ENCODE measurements at regions of chr1 and their contacts with region 1.

Region 1: GRCh38 chr1:170687621-170688020 is 23.7 kb downstream of the PRRX1 start:
- DNase-seq: no peak
- CTCF ChIP-seq: no peak

Region 2: DNA sequence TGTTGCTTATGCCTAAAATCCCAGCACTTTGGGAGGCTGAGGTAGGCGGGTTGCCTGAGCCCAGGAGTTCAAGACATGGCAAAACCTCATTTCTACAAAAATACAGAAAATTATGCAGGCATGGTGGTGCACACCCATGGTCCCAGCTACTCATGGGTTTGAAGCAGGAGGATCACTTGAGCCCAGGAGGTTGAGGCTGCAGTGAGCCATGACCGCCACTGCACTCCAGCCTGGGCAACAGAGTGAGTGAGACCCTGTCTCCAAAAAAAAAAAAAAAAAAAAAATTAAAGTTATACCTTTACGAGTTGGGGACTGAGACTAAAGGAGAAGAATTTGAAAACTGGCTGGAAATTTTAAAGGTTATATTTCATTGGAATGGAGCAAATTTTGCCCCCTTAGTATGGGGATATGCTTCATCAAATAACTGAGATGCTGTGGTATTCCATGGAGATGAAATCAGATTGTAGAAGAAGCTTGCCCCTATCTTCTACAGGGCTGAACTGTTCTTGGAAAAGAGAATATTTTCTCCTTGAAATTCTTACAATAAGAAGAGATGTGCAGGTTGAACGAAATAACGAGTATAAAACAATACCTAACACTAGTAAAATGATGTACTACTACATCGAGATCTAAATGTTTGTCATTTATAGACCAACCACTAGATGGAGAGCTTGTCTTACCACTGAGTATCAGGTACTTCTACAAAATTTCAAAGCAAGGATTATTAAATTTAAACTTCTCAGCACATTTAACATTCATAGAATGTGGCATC is 759.0 kb before region 1 on chr1:
- CTCF ChIA-PET with region 1: interaction called, 15 read pairs
- POLR2A ChIA-PET with region 1: no interaction called
- DNase-seq: no peak
- CTCF ChIP-seq: peak; percentile 65

Region 3: GRCh38 chr1:170513138-170513537 is 174.5 kb before region 1 on chr1:
- CTCF ChIA-PET with region 1: no interaction called
- POLR2A ChIA-PET with region 1: no interaction called
- DNase-seq: no peak
- CTCF ChIP-seq: no peak

Region 4: DNA sequence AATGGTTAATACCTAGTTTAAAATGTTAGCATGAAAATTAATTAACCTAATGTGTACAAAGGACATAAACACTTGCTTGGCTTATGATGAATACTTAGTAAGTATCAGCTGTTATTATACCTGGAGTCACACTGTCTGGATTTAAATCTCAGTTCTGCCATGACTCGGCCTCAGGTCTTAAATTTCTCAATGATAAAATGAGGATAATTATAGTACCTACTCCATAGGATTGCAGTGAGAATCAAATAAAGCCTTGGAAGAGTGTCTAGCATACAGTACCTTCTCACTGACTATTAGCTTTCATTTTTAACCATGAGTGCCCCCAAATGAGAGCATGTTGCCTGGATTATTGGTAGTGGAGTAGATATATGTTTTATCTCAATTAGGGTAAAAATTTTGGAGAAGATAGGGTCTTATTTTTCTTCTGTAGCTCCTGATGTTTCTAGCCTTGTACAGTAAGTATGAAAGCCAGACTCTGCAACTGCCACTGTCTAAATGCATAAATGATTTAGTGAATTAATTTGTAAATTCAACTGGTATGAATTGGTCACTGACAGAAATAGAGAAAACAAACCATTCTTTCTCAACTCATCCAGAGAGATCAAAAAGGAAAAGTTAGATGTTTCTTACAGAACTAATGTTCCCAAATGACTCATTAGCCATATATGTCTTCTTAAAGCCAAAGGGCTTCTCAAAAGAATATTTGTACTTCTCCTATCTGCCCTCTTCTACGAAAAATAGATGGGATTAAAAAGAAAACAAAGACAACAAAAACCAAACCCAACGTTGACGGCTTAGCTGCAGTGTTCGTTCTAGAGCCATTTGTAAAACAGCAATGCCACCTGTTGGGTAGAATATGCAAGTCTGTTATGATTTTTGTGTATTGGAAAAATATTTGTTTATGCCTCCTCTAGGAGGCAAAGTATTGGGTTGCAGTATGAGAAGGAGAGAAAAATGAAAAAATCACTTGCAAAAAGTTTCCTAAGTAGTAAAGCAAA is 193.9 kb after region 1 on chr1:
- CTCF ChIA-PET with region 1: interaction called, 49 read pairs
- POLR2A ChIA-PET with region 1: no interaction called
- DNase-seq: no peak
- CTCF ChIP-seq: peak; percentile 57

Measured in GM10248 (cell line).